ENCODE measurements at regions of chr7 and their contacts with region 1.

Region 1: GRCh38 chr7:7795203-7796135 is 77.1 kb upstream of the RPA3 start:
- DNase-seq: peak; percentile 74 to 98
- H3K4me3 ChIP-seq: no peak overlapping the region
- H3K27ac ChIP-seq: peak overlapping the region; percentile 81
- H3K4me1 ChIP-seq: peaks cover 44% of the 10 kb centered on the region
- H3K27me3 ChIP-seq: no peaks in the 10 kb centered on the region
- CTCF ChIP-seq: no peak

Region 2: GRCh38 chr7:7640221-7641128 is 155.0 kb before region 1 on chr7 and contains the start of gene UMAD1:
- CTCF ChIA-PET with region 1: no interaction called
- POLR2A ChIA-PET with region 1: no interaction called
- intact Hi-C with region 1: loop called (anchors 1 kb)
- DNase-seq: peak; percentile 99
- H3K4me3 ChIP-seq: peak within 1 kb of the TSS; percentile 83
- H3K27ac ChIP-seq: peak within 1 kb of the TSS; percentile 58
- H3K4me1 ChIP-seq: peaks cover 27% of the 10 kb centered on the region
- H3K27me3 ChIP-seq: no peaks in the 10 kb centered on the region
- CTCF ChIP-seq: no peak
- total RNA-seq, gene UMAD1: 15.5 and 20.5 TPM in 2 replicates

Region 3: GRCh38 chr7:7816084-7816483 is 20.6 kb after region 1 on chr7:
- CTCF ChIA-PET with region 1: no interaction called
- POLR2A ChIA-PET with region 1: no interaction called
- intact Hi-C with region 1: no loop called
- DNase-seq: no peak
- H3K4me3 ChIP-seq: no peak overlapping the region
- H3K27ac ChIP-seq: no peak overlapping the region
- H3K4me1 ChIP-seq: no peaks in the 10 kb centered on the region
- H3K27me3 ChIP-seq: no peaks in the 10 kb centered on the region
- CTCF ChIP-seq: no peak

Region 4: GRCh38 chr7:7851381-7851780 is 55.9 kb after region 1 on chr7:
- CTCF ChIA-PET with region 1: no interaction called
- POLR2A ChIA-PET with region 1: no interaction called
- intact Hi-C with region 1: loop called (anchors 5 kb)
- DNase-seq: no peak
- H3K4me3 ChIP-seq: no peak overlapping the region
- H3K27ac ChIP-seq: no peak overlapping the region
- H3K4me1 ChIP-seq: peaks cover 16% of the 10 kb centered on the region
- H3K27me3 ChIP-seq: no peaks in the 10 kb centered on the region
- CTCF ChIP-seq: no peak

Region 5: DNA sequence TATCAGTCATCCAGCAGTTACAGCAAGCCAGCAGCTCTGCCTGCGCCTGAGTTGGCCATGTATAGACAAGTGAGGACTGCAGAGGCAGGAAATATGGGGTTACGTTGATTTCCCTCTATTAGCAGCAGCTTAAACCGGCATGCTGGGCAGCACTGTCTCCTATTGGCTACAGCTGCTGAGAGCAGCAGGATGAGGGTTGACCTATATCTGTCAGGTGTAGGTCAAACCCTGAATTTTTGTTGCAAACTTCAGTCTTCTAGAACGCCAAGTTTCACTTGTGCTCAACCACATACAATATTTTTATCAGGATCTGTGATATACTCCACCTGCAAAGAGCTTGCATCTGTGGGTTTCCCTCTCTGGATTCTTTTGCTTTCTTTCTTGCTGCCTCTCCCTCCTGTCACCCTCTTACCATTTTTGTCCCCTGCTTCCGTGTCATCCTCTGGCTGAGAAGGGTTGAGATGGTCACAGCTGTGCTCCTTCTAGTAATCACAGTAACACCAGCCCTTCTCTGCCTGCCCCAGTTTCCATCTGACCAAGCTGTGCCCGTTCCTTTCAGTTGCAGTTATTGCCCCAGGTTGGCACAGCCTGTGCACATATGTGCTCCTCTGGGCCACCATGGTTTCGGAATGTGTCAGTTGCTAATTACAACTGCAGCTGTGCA is 149.3 kb after region 1 on chr7:
- CTCF ChIA-PET with region 1: no interaction called
- POLR2A ChIA-PET with region 1: no interaction called
- intact Hi-C with region 1: no loop called
- DNase-seq: no peak
- H3K4me3 ChIP-seq: no peak overlapping the region
- H3K27ac ChIP-seq: no peak overlapping the region
- H3K4me1 ChIP-seq: peaks cover 29% of the 10 kb centered on the region
- H3K27me3 ChIP-seq: no peaks in the 10 kb centered on the region
- CTCF ChIP-seq: no peak